Right lobe of liver (tissue), 6 donors: ENCODE measurements at regions of chr11 and their contacts with region 1.

Region 1: GRCh38 chr11:111409915-111410314 is 30.8 kb upstream of the POU2AF1 start:
- DNase-seq: no peak
- ATAC-seq: no peak
- H3K4me3 ChIP-seq: no peak overlapping the region
- H3K27ac ChIP-seq: no peak overlapping the region
- H3K4me1 ChIP-seq: no peaks in the 10 kb centered on the region
- H3K27me3 ChIP-seq: no peaks in the 10 kb centered on the region
- CTCF ChIP-seq: no peak
- POLR2A ChIP-seq: no peak

Region 2: DNA sequence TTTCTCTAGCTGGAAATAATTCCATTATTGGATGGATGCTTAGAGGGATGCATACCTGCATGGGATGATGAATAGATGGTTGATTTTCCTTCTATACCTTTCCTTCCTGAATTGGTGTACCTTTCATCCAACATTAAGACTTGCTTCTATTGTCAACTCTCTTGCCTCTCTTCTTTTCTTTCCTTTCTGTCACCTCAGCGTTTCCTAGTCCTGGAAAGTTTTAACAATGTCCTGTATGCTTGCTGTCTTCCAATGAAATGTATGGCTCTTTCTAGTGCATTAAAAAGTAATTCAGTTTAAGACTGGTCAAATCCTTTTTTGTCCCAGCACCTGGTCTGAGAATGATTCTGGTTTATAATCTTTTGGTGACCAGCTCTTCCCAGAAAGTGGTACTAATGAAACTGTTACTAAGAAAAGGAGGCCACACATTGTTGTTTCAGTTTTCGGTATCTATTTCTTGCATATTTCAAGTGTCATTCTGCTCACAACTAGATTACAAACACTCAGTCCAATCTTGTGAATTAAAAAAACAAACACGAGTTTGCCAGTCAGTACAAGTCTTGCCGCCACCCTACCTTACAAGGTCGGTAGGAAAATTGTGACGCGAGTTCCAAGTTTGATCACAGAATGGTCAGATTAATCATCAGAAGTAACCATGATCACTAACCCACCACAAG is 38.9 kb before region 1 on chr11:
- intact Hi-C with region 1: loop called in 1 of 2 experiments (anchors 5 kb)
- DNase-seq: no peak
- ATAC-seq: no peak
- H3K4me3 ChIP-seq: no peak overlapping the region
- H3K27ac ChIP-seq: no peak overlapping the region
- H3K4me1 ChIP-seq: no peaks in the 10 kb centered on the region
- H3K27me3 ChIP-seq: no peaks in the 10 kb centered on the region
- CTCF ChIP-seq: no peak
- POLR2A ChIP-seq: no peak